MCF 10A (cell line): ENCODE measurements at regions of chr4 and their contacts with region 1.

Region 1: GRCh38 chr4:186685767-186686183 is 37.9 kb downstream of the FAT1 start:
- DNase-seq: peak; percentile 69
- H3K4me3 Mint-ChIP-seq: peak overlapping the region; percentile 26
- H3K27ac Mint-ChIP-seq: peak overlapping the region; percentile 88
- H3K4me1 Mint-ChIP-seq: peaks cover 37% of the 10 kb centered on the region
- H3K27me3 Mint-ChIP-seq: no peaks in the 10 kb centered on the region
- CTCF ChIP-seq: no peak

Region 2: DNA sequence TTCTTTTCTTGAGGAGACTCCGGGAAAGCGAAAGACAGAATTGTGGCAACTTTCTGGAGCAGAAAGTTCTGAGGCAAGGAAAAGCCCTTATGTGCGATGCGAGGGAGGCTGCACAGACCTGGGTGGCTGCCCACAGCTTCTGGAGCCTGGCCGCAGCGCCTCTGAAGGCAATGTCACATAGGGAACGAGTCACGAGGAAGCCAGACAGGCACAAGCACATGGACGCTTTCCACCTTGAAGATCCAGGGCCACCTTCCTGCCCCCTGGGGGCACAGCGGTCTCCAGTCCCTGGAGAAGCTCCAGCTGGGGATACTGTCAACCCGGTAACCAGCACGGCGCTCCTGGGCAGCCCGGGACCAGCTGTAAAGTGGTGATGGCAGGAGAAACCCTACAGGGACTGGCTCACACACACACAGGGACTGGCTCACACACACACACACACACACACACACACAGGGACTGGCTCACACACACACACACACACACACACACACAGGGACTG is 200.2 kb before region 1 on chr4:
- CTCF ChIA-PET with region 1: no interaction called
- POLR2A ChIA-PET with region 1: no interaction called
- intact Hi-C with region 1: no loop called
- DNase-seq: no peak
- H3K4me3 Mint-ChIP-seq: peak overlapping the region; percentile 50
- H3K27ac Mint-ChIP-seq: no peak overlapping the region
- H3K4me1 Mint-ChIP-seq: peaks cover 7% of the 10 kb centered on the region
- H3K27me3 Mint-ChIP-seq: no peaks in the 10 kb centered on the region
- CTCF ChIP-seq: no peak

Region 3: GRCh38 chr4:186699290-186699689 is 13.5 kb after region 1 on chr4:
- CTCF ChIA-PET with region 1: interaction called, 3 read pairs
- POLR2A ChIA-PET with region 1: interaction called, 11 read pairs
- intact Hi-C with region 1: no loop called
- DNase-seq: peak; percentile 62
- H3K4me3 Mint-ChIP-seq: no peak overlapping the region
- H3K27ac Mint-ChIP-seq: peak overlapping the region; percentile 88
- H3K4me1 Mint-ChIP-seq: peaks cover 45% of the 10 kb centered on the region
- H3K27me3 Mint-ChIP-seq: no peaks in the 10 kb centered on the region
- CTCF ChIP-seq: no peak